ENCODE measurements at regions of chr6 and their contacts with region 1.

Region 1: GRCh38 chr6:53926525-53926924 is 131.7 kb downstream of the LRRC1 start:
- DNase-seq: peak; percentile 12 to 88
- H3K4me3 ChIP-seq: peak overlapping the region; percentile 39; the same call in 1 of the 2 replicates
- H3K27ac ChIP-seq: peak overlapping the region; percentile 87
- H3K4me1 ChIP-seq: peaks cover 70% of the 10 kb centered on the region
- H3K27me3 ChIP-seq: no peaks in the 10 kb centered on the region
- CTCF ChIP-seq: no peak

Region 2: GRCh38 chr6:53734473-53735299 is 191.8 kb before region 1 on chr6:
- CTCF ChIA-PET with region 1: interaction called, 6 read pairs
- POLR2A ChIA-PET with region 1: no interaction called
- intact Hi-C with region 1: loop called (anchors 2 kb)
- DNase-seq: peak; percentile 59 to 96
- H3K4me3 ChIP-seq: peak overlapping the region; percentile 44
- H3K27ac ChIP-seq: peak overlapping the region; percentile 95
- H3K4me1 ChIP-seq: peaks cover 53% of the 10 kb centered on the region
- H3K27me3 ChIP-seq: no peaks in the 10 kb centered on the region
- CTCF ChIP-seq: peak; percentile 61

Region 3: DNA sequence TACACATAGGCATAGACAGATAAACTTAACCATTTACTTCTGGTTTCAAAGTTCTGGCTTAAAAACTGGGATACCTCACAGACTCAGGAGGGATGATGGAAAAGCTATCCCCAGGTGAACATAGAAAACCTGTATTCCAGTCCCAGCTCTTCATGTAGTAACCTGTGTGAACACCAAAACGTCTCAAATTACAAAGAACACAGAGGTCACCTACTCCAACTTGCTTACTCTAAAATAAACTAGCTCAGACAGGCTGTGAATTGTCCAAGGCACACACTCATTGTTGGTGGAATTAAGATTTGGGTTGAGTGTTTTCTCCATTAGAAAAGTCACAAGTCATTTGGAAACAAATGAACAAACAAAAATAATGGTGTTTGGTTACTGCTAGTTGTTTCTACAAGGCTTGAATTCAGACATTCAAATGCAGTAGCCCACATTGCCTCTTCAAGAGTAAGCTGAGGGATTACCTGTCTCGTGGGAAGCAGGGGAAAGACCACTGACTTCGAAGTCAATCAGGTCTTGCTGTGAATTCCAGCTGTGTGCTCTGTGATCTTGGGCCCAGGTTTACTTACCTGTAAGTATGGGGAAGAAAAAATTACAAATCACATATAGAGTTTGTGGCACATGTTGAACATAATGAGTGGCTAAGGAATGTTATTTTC is 180.0 kb before region 1 on chr6:
- CTCF ChIA-PET with region 1: no interaction called
- POLR2A ChIA-PET with region 1: no interaction called
- intact Hi-C with region 1: loop called (anchors 1 kb)
- DNase-seq: peak in 1 of 2 experiments; percentile 66
- H3K4me3 ChIP-seq: no peak overlapping the region; the same call in 1 of the 2 replicates
- H3K27ac ChIP-seq: peak overlapping the region; percentile 55
- H3K4me1 ChIP-seq: peaks cover 36% of the 10 kb centered on the region
- H3K27me3 ChIP-seq: no peaks in the 10 kb centered on the region
- CTCF ChIP-seq: no peak

Region 4: GRCh38 chr6:54874337-54875023 is 948.0 kb after region 1 on chr6:
- CTCF ChIA-PET with region 1: no interaction called
- POLR2A ChIA-PET with region 1: interaction called, 15 read pairs
- intact Hi-C with region 1: no loop called
- DNase-seq: peak in 1 of 2 experiments; percentile 87
- H3K4me3 ChIP-seq: no peak overlapping the region
- H3K27ac ChIP-seq: peak overlapping the region; percentile 81
- H3K4me1 ChIP-seq: peaks cover 32% of the 10 kb centered on the region
- H3K27me3 ChIP-seq: no peaks in the 10 kb centered on the region
- CTCF ChIP-seq: no peak

Measured in PC-9 (cell line).